Upper lobe of right lung (tissue), 1 donor: ENCODE measurements at regions of chr18 and their contacts with region 1.

Region 1: DNA sequence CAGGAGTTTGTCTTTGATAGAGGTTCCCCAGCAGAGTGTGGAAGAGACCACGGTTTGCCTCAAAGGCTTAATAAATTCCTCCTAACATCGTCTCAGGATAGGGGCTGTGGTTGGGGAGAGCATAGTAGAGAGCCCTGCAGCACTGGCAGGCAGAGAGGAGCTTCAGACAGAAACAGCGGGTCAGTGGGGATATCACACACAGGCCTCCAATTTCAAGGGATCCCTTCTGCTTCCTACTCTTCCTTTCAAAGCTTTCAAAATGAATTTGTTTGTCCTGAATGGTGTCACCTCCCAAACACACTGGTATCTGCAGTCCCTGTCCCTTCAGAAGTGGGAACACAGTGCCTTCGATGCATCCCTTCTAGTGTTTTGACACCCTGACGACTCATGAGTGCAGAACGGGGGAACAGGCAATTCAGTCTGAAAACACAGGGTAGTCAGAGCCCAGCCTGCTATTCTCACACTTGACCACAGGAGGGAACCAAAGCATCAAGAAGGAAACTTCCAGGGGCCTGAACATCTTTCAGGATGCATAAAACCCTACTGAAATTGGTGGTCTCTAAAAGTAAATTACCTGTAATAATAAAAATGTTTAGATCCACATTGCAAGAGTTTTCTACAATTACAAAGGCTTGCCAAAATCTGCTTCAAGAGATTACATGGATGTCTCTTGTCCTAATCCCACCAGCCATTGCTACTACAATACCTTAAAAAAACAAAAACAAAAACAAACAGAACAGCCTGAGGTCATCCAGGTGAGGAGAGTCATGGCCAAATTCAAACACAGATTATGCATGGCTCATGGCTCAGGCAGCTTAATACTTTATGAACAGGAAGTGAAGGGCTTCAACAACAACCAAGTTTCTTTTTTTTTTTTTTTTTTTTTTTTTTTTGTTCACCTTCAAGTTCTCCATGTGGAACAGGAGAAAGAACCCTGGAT is 49.8 kb downstream of the SLC14A2 start:
- DNase-seq: no peak
- ATAC-seq: peak; percentile 88
- H3K4me3 ChIP-seq: no peak overlapping the region
- H3K27ac ChIP-seq: peak overlapping the region; percentile 63
- H3K4me1 ChIP-seq: peaks cover 24% of the 10 kb centered on the region
- H3K27me3 ChIP-seq: no peaks in the 10 kb centered on the region
- CTCF ChIP-seq: peak; percentile 96

Region 2: GRCh38 chr18:45303026-45303425 is 362.1 kb before region 1 on chr18:
- intact Hi-C with region 1: no loop called
- DNase-seq: no peak
- ATAC-seq: no peak
- H3K4me3 ChIP-seq: no peak overlapping the region
- H3K27ac ChIP-seq: no peak overlapping the region
- H3K4me1 ChIP-seq: no peaks in the 10 kb centered on the region
- H3K27me3 ChIP-seq: no peaks in the 10 kb centered on the region
- CTCF ChIP-seq: no peak

Region 3: DNA sequence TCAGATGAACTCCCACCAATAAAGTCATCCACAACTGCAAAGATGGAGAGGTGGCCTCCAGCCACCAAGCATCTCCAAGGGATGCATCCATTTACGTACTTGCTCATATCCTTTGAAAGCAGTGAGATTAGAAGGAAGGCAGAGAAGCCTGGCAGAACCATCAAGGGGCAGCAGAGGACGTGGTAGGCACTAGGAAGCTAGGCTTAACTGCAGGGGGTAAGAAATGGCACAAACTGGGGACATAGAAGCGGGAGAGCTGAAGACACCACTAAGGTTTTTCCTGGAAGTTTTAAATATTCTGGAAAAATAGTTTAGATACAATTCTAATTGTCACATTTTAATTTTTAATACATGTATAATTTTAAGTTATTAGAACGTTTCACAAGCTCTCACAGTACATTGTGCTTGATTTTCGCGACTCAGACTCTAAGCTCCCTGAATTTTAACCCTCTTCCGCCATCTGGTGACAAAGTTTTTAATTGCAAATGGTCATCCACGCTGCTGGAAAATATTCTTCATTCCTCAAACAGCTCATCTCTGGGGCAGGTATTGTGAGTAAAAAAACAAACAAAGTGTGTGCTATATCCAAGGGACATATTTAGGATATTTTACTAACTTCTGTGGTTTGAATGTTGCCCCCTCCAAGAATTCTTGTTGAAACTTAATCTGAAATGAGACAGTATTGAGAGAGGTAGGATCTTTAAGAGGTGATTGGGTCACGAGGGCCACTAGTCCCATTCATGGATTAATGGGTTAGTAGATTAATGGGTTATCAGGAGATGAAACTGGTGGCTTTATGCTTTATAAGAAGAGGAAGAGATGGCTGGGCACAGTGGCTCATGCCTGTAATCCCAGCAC is 408.6 kb after region 1 on chr18:
- intact Hi-C with region 1: loop called (anchors 10 kb)
- DNase-seq: no peak
- ATAC-seq: peak; percentile 53
- H3K4me3 ChIP-seq: no peak overlapping the region
- H3K27ac ChIP-seq: no peak overlapping the region
- H3K4me1 ChIP-seq: peaks cover 30% of the 10 kb centered on the region
- H3K27me3 ChIP-seq: no peaks in the 10 kb centered on the region
- CTCF ChIP-seq: peak; percentile 76